PC-9 (cell line): ENCODE measurements at regions of chr4 and their contacts with region 1.

Region 1: GRCh38 chr4:17823871-17824669 is 13.3 kb downstream of the NCAPG start:
- DNase-seq: no peak
- H3K4me3 ChIP-seq: no peak overlapping the region
- H3K27ac ChIP-seq: no peak overlapping the region
- H3K4me1 ChIP-seq: no peaks in the 10 kb centered on the region
- H3K27me3 ChIP-seq: no peaks in the 10 kb centered on the region
- CTCF ChIP-seq: no peak

Region 2: DNA sequence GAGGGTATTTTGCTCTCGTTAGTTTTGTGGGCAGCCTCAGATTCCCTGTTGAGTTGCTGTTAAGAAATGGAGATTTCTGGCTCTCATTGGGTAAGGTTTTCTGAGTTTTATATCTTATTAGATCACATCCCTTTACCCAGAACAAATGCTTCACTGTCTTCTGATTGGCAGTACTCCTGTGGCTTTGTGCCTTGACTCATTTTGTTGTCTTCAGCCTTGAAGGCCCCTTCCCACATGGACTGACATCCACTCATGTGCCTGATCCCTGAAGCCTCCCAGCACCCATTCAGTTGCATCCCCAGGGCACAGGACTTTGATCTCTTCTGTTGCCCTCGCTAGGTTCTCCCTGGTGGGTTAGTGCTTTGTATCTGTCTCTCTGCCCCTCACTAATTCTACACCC is 199.2 kb before region 1 on chr4:
- CTCF ChIA-PET with region 1: no interaction called
- POLR2A ChIA-PET with region 1: no interaction called
- intact Hi-C with region 1: no loop called
- DNase-seq: no peak
- H3K4me3 ChIP-seq: no peak overlapping the region
- H3K27ac ChIP-seq: no peak overlapping the region
- H3K4me1 ChIP-seq: no peaks in the 10 kb centered on the region
- H3K27me3 ChIP-seq: no peaks in the 10 kb centered on the region
- CTCF ChIP-seq: no peak

Region 3: GRCh38 chr4:17846266-17846665 is 22.2 kb after region 1 on chr4:
- CTCF ChIA-PET with region 1: no interaction called
- POLR2A ChIA-PET with region 1: no interaction called
- intact Hi-C with region 1: loop called (anchors 2 kb)
- DNase-seq: no peak
- H3K4me3 ChIP-seq: no peak overlapping the region
- H3K27ac ChIP-seq: no peak overlapping the region
- H3K4me1 ChIP-seq: no peaks in the 10 kb centered on the region
- H3K27me3 ChIP-seq: no peaks in the 10 kb centered on the region
- CTCF ChIP-seq: no peak